Body of pancreas (tissue), 4 donors: ENCODE measurements at regions of chr6 and their contacts with region 1.

Region 1: GRCh38 chr6:166400181-166400580 is 17.4 kb upstream of the MPC1 start:
- DNase-seq: no peak
- ATAC-seq: no peak
- H3K4me3 ChIP-seq: no peak overlapping the region
- H3K27ac ChIP-seq: no peak overlapping the region
- H3K4me1 ChIP-seq: no peaks in the 10 kb centered on the region
- H3K27me3 ChIP-seq: no peaks in the 10 kb centered on the region
- CTCF ChIP-seq: no peak
- POLR2A ChIP-seq: no peak

Region 2: DNA sequence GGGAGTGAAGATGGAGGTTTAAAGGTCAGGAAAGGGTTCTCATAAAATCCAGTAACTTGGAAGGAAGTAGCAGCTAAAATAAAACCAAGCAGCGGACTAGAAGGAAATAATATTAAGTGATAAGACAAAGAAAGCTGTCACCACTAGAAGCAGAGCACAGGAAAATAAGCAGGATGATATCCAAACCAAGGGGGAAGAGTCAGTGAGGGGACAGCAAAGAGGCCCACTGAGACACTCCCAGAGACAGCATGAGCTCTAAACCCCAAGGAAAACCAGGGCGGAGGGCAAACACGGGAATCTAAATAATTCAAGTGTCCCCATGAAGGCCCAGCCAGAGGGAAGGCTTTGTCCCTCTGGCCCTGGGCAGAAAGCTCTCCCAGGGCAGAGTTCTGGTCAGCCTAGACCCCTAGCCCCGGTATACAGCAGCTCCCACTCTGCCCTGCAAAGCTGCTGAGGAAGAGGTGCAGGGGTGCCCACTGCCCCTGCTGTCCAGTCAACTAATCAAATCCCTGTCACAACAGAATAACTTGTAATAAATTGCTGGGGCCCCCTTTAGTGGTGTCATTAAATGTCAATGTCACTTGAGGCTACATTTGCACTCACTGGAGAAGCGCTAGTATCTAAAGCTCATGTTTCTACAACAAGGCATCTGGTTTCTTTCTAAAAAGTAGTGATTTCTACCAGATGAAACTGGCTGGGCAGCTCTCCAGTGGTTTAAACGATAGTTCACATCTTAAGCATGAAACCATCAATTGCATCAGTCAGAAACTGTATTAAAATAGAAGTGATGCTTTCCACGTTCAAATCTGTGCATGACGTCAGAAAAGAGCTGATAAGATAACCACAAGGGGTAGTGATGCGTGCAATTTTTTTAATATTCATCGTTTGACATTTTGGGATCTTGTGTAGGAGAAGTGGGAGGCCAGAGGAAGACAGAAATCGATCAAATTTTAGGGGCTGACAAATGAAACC is 750.7 kb before region 1 on chr6:
- intact Hi-C with region 1: no loop called
- DNase-seq: peak in 2 of 4 donors; percentile 26 to 40
- ATAC-seq: peak; percentile 52
- H3K4me3 ChIP-seq: no peak overlapping the region
- H3K27ac ChIP-seq: peak overlapping the region in 1 of 4 donors; percentile 21
- H3K4me1 ChIP-seq: no peaks in the 10 kb centered on the region
- H3K27me3 ChIP-seq: no peaks in the 10 kb centered on the region
- CTCF ChIP-seq: no peak
- POLR2A ChIP-seq: no peak

Region 3: GRCh38 chr6:166275714-166276166 is 124.4 kb before region 1 on chr6:
- intact Hi-C with region 1: loop called (anchors 2 kb)
- DNase-seq: peak; percentile 69 to 81 (median 74)
- ATAC-seq: peak; percentile 91
- H3K4me3 ChIP-seq: no peak overlapping the region
- H3K27ac ChIP-seq: no peak overlapping the region
- H3K4me1 ChIP-seq: no peaks in the 10 kb centered on the region
- H3K27me3 ChIP-seq: peaks cover 0 to 2% of the 10 kb centered on the region in 2 donors
- CTCF ChIP-seq: peak; percentile 96 to 99 (median 98)
- POLR2A ChIP-seq: no peak

Region 4: GRCh38 chr6:166598441-166599138 is 198.4 kb after region 1 on chr6:
- intact Hi-C with region 1: no loop called
- DNase-seq: peak in 1 of 4 donors; percentile 49
- ATAC-seq: peak; percentile 63
- H3K4me3 ChIP-seq: no peak overlapping the region
- H3K27ac ChIP-seq: peak overlapping the region in 1 of 4 donors; percentile 39
- H3K4me1 ChIP-seq: no peaks in the 10 kb centered on the region
- H3K27me3 ChIP-seq: no peaks in the 10 kb centered on the region
- CTCF ChIP-seq: no peak
- POLR2A ChIP-seq: no peak